GM12878 (cell line): ENCODE measurements at regions of chrX and their contacts with region 1.

Region 1: DNA sequence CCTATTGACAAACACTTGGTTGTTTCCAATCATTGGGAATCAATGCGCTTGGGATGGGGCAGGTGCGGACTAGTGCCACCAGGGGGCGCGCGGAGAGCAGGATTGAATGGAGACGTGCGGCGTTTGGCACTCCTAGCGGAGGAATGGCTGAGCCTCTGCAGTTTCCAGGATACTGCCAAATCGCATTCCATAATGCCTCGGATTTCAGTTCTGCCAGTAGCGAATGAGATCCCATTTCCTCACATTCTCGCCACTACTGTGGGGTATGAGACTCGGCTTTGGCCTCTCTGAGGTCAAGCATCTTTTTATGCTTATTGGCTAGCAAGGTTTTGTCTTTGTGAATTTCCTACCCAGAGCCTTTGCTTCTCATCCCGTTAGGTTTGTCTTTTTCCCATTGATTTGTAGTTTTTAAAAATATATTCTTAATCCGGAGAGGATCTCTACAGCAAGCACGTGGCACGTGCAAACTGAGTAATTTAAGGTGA is 28.7 kb downstream of the CLDN34 start:
- DNase-seq: no peak
- ATAC-seq: peak; percentile 60
- H3K4me3 ChIP-seq: no peak overlapping the region
- H3K27ac ChIP-seq: no peak overlapping the region
- H3K4me1 ChIP-seq: peaks cover 9% of the 10 kb centered on the region
- H3K27me3 ChIP-seq: no peaks in the 10 kb centered on the region
- CTCF ChIP-seq: peak; percentile 94 to 99 (median 96)
- EP300 ChIP-seq: no peak
- POLR2A ChIP-seq: no peak
- RAD21 ChIP-seq: peak; percentile 98

Region 2: DNA sequence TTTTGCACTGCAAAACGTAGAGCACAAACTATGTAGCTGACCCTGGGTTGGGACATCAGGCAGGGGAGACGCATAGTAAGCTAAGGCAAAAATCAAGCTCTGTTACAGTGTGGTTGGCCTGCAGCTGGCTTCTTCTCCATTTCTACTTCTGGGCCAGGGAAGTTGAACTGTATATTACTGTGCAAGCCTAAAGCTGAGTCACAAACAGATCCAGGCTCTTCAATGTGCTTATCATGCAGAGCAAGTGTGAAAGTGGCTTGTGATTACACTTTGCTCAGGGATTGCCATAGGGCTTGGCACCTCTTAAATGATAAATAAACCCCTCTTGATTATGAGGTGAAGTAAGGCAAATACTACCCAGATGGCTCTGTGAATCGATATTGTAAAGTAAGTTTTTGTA is 11.7 kb after region 1 on chrX:
- CTCF ChIA-PET with region 1: interaction called, 30 read pairs
- POLR2A ChIA-PET with region 1: interaction called, 26 read pairs
- RAD21 ChIA-PET with region 1: interaction called, 53 read pairs
- SMC1A ChIA-PET with region 1: interaction called, 54 read pairs
- in situ Hi-C with region 1: no loop called
- intact Hi-C with region 1: loop called (anchors 2 kb)
- DNase-seq: no peak
- ATAC-seq: peak; percentile 1; the same call in 2 of the 3 replicates
- H3K4me3 ChIP-seq: no peak overlapping the region
- H3K27ac ChIP-seq: no peak overlapping the region
- H3K4me1 ChIP-seq: peaks cover 9% of the 10 kb centered on the region
- H3K27me3 ChIP-seq: no peaks in the 10 kb centered on the region
- CTCF ChIP-seq: no peak
- EP300 ChIP-seq: no peak
- POLR2A ChIP-seq: no peak
- RAD21 ChIP-seq: no peak

Region 3: GRCh38 chrX:10030570-10030969 is 34.7 kb after region 1 on chrX:
- CTCF ChIA-PET with region 1: interaction called, 6 read pairs
- POLR2A ChIA-PET with region 1: no interaction called
- RAD21 ChIA-PET with region 1: interaction called, 3 read pairs
- SMC1A ChIA-PET with region 1: interaction called, 22 read pairs
- in situ Hi-C with region 1: no loop called
- intact Hi-C with region 1: no loop called
- DNase-seq: no peak
- ATAC-seq: peak; percentile 24
- H3K4me3 ChIP-seq: no peak overlapping the region
- H3K27ac ChIP-seq: no peak overlapping the region
- H3K4me1 ChIP-seq: no peaks in the 10 kb centered on the region
- H3K27me3 ChIP-seq: no peaks in the 10 kb centered on the region; a peak in 1 of 4 replicates
- CTCF ChIP-seq: no peak
- EP300 ChIP-seq: no peak
- POLR2A ChIP-seq: no peak
- RAD21 ChIP-seq: no peak

Region 4: GRCh38 chrX:10062352-10062751 is 66.5 kb after region 1 on chrX:
- CTCF ChIA-PET with region 1: interaction called, 5 read pairs
- POLR2A ChIA-PET with region 1: no interaction called
- RAD21 ChIA-PET with region 1: interaction called, 4 read pairs
- SMC1A ChIA-PET with region 1: interaction called, 7 read pairs
- in situ Hi-C with region 1: no loop called
- intact Hi-C with region 1: loop called (anchors 2 kb)
- DNase-seq: peak; percentile 45
- ATAC-seq: peak; percentile 89
- H3K4me3 ChIP-seq: no peak overlapping the region
- H3K27ac ChIP-seq: no peak overlapping the region
- H3K4me1 ChIP-seq: peaks cover 5% of the 10 kb centered on the region; the same call in 1 of the 2 replicates
- H3K27me3 ChIP-seq: no peaks in the 10 kb centered on the region
- CTCF ChIP-seq: no peak
- EP300 ChIP-seq: peak in 1 of 2 experiments; percentile 53; a peak in 2 of 4 replicates
- POLR2A ChIP-seq: no peak
- RAD21 ChIP-seq: no peak

Region 5: GRCh38 chrX:10098270-10098713 is 102.4 kb after region 1 on chrX:
- CTCF ChIA-PET with region 1: interaction called, 19 read pairs
- POLR2A ChIA-PET with region 1: interaction called, 8 read pairs
- RAD21 ChIA-PET with region 1: interaction called, 59 read pairs
- SMC1A ChIA-PET with region 1: interaction called, 18 read pairs
- in situ Hi-C with region 1: no loop called
- intact Hi-C with region 1: no loop called
- DNase-seq: peak; percentile 51
- ATAC-seq: peak; percentile 87
- H3K4me3 ChIP-seq: peak overlapping the region; percentile 50
- H3K27ac ChIP-seq: peak overlapping the region; percentile 77
- H3K4me1 ChIP-seq: peaks cover 11% of the 10 kb centered on the region
- H3K27me3 ChIP-seq: no peaks in the 10 kb centered on the region; a peak in 1 of 4 replicates
- CTCF ChIP-seq: no peak
- EP300 ChIP-seq: peak in 1 of 2 experiments; percentile 63; a peak in 1 of 4 replicates
- POLR2A ChIP-seq: no peak
- RAD21 ChIP-seq: 0 out of 2 replicates have a peak, but pooled peaks have one; percentile 19

Region 6: DNA sequence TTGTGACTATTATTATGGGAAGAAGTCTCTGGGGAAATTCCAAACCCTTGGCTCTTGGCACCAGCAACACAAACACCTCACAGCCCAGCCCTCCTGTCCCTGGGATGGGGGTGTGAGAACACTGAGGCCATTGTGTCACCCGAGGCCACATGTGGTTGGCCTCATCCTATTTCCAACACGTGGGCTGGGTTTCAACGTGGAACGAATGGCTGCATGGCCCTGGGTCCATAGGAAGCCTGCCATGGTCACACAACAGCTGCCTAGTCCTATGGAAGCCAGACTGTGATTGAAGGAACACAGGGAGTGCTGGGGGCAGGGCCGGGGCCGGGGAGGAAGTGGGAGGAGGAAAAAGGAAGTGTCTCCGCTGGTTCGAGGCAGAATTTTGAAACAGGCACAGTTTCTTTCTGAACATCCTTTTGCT is 170.8 kb after region 1 on chrX:
- CTCF ChIA-PET with region 1: no interaction called
- POLR2A ChIA-PET with region 1: no interaction called
- RAD21 ChIA-PET with region 1: interaction called, 3 read pairs
- SMC1A ChIA-PET with region 1: no interaction called
- in situ Hi-C with region 1: no loop called
- intact Hi-C with region 1: loop called (anchors 5 kb)
- DNase-seq: no peak
- ATAC-seq: peak; percentile 35
- H3K4me3 ChIP-seq: no peak overlapping the region
- H3K27ac ChIP-seq: no peak overlapping the region
- H3K4me1 ChIP-seq: peaks cover 17% of the 10 kb centered on the region
- H3K27me3 ChIP-seq: 0 out of 4 replicates have a peak, but pooled peaks cover 0 to under 1% of the 10 kb centered on the region in 2 experiments
- CTCF ChIP-seq: no peak
- EP300 ChIP-seq: no peak
- POLR2A ChIP-seq: no peak
- RAD21 ChIP-seq: no peak

Region 7: DNA sequence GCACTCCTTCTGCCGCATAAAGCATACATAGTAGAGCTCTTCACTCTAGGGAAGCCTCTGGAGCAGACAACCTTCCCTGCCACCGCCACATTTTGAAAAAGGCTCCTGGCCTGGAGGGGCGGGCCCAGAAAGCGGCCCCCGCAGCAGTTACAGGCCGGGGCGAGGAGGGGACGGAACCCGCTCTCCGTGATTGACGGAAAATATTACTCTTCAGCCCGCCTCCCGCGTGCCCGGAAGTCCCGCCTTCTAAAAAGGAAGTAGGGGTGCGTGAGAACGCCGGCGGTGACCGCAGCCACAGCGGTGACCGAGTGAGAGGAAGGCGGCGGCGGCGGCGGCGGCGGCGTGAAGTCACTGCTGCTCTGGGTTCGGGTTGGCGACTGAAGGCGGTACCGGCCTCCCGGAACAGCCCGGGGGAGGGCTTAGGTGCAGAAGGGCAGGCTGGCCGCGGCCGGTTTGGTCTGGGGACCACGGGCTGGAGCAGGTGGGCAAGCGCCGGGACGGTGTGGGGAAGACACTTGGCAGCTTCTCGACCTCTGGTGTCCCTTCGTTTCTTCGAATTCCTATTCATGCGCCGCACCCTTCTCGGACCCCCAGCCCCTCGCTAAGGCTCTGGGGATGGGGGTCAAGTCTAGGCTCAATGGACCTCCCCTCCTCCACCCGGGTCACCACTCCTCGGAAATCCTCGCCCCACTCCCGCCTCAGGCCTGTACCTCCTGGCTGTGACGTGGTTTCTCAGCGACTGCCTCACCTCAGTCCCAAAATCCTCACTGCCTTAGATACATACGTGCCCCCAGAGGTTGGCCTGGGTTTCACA is 1115.3 kb after region 1 on chrX and contains the start of gene HCCS:
- CTCF ChIA-PET with region 1: no interaction called
- POLR2A ChIA-PET with region 1: no interaction called
- RAD21 ChIA-PET with region 1: no interaction called
- SMC1A ChIA-PET with region 1: no interaction called
- in situ Hi-C with region 1: loop called (anchors 25 kb)
- intact Hi-C with region 1: no loop called
- DNase-seq: peak; percentile 46
- ATAC-seq: peak; percentile 88
- H3K4me3 ChIP-seq: peak within 1 kb of the TSS; percentile 69
- H3K27ac ChIP-seq: peak within 1 kb of the TSS; percentile 91
- H3K4me1 ChIP-seq: no peaks in the 10 kb centered on the region; the same call in 1 of the 2 replicates
- H3K27me3 ChIP-seq: no peaks in the 10 kb centered on the region
- CTCF ChIP-seq: no peak
- EP300 ChIP-seq: no peak
- POLR2A ChIP-seq: peak; percentile 77
- RAD21 ChIP-seq: no peak
- polyA plus RNA-seq, gene HCCS: 11.8 to 15.6 TPM